ENCODE measurements at regions of chr15 and their contacts with region 1.

Region 1: DNA sequence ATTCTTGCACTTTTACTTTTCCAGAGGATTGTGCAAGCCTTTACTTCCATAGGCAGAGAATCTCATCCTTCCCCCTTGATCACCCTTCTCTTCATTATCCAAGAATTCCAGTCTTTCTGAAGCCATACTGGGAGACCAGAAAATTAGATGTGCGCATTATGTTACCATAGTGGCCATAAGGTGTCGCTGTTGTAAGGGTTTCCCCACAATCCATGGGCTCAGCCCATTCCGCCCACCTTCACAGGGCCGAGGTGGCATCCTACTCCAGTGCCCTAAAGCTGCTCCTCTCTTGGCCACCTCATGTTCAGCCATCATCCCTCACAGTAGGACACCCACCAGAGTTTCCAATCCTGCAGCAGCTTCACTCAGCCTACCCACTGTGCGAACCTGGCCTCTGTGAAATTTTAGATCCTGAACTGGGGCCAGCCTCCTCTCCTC is 35.0 kb downstream of the CTSH start:
- DNase-seq: peak in 1 of 2 donors; percentile 38
- ATAC-seq: peak in 6 of 8 donors; percentile 13 to 72 (median 46)
- H3K4me3 ChIP-seq: no peak overlapping the region
- H3K27ac ChIP-seq: no peak overlapping the region
- H3K4me1 ChIP-seq: peaks cover 10 to 76% (median 40%) of the 10 kb centered on the region in 9 donors
- H3K27me3 ChIP-seq: no peaks in the 10 kb centered on the region
- CTCF ChIP-seq: peak; percentile 49 to 75 (median 69)

Region 2: DNA sequence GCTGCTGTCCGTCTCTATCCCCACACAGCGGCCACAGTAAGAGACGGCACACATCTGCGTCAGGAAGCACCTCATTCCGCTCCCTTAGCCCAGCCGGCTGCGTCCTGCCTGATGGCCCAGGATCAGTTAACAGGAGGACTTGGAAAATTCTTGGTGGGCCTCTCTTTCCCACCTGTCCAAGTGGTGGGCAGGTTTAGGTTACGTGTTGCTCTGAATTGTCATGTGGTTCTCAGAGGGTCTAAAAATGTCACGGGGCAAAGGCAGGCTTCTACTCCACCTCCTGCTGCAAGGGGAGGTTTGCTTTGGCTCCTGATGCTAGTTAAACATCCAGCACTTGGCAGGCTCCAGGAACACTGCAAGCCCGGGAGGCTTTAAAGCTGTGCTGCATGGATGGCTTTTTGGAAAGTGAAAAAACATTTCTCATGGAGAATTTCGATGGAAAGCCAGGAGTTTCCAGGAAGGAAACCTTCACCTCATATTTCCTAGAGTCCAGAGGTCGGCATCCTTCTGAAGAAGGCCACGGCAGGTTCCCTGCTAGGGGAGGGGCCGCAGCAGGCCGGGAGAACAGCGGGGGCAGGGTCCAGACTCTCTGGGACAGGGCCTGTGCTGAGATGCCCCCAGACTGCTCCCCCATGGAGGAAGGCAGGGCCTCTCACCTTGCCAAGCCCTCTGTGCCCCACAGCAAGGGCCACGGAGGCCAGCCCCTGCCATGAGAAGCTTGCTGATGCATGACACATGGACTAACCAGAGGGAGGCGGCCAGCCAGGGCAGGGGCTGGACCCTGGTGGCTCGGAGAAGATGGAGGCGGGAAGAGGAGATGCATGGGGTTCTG is 24.2 kb after region 1 on chr15:
- intact Hi-C with region 1: loop called in 1 of 10 experiments (anchors 2 kb)
- DNase-seq: peak in 1 of 2 donors; percentile 52
- ATAC-seq: peak; percentile 4 to 62 (median 50)
- H3K4me3 ChIP-seq: no peak overlapping the region
- H3K27ac ChIP-seq: peak overlapping the region; percentile 3 to 86 (median 64)
- H3K4me1 ChIP-seq: peaks cover 3 to 83% (median 61%) of the 10 kb centered on the region in 9 donors
- H3K27me3 ChIP-seq: no peaks in the 10 kb centered on the region
- CTCF ChIP-seq: peak in 2 of 9 donors; percentile 5 to 21

Region 3: GRCh38 chr15:78979456-78980320 is 69.9 kb after region 1 on chr15:
- intact Hi-C with region 1: loop called in 9 of 10 experiments (anchors 1 to 10 kb)
- DNase-seq: peak in 1 of 2 donors; percentile 71
- ATAC-seq: peak; percentile 56 to 75 (median 68)
- H3K4me3 ChIP-seq: no peak overlapping the region
- H3K27ac ChIP-seq: peak overlapping the region in 2 of 10 donors; percentile 2 to 5
- H3K4me1 ChIP-seq: peaks cover 0 to 43% (median 8%) of the 10 kb centered on the region in 9 donors
- H3K27me3 ChIP-seq: no peaks in the 10 kb centered on the region
- CTCF ChIP-seq: peak; percentile 63 to 79 (median 70)

Region 4: GRCh38 chr15:79051029-79051428 is 141.2 kb after region 1 on chr15:
- intact Hi-C with region 1: no loop called
- DNase-seq: no peak
- ATAC-seq: no peak
- H3K4me3 ChIP-seq: no peak overlapping the region
- H3K27ac ChIP-seq: no peak overlapping the region
- H3K4me1 ChIP-seq: no peaks in the 10 kb centered on the region
- H3K27me3 ChIP-seq: peaks cover 0 to 5% (median 0%) of the 10 kb centered on the region in 7 donors
- CTCF ChIP-seq: no peak

Region 5: DNA sequence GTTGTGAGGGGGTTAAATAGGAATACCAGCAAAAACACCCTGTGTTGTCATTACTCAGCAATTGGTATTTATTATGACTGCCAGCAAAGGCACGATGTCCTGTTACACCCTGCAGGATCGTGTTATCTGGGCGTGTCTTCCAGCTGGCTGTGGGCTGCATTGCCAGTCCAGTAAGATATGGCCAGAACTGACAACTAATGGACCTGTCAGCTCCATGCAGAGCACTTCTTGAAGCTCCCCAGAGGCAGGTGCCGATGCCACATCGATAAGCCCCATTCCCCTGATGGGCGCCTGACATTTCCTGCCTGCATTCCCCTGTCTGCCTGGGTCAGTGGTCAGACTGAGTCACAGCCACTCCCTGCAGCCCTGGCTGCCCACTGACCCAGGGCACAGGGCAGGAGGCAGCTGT is 260.4 kb after region 1 on chr15:
- intact Hi-C with region 1: loop called in 1 of 10 experiments (anchors 10 kb)
- DNase-seq: peak; percentile 21 to 35
- ATAC-seq: peak in 7 of 8 donors; percentile 69 to 87 (median 82)
- H3K4me3 ChIP-seq: no peak overlapping the region
- H3K27ac ChIP-seq: peak overlapping the region in 6 of 10 donors; percentile 17 to 57 (median 45)
- H3K4me1 ChIP-seq: peaks cover 4 to 34% (median 23%) of the 10 kb centered on the region in 9 donors
- H3K27me3 ChIP-seq: peaks cover 0 to 26% (median 0%) of the 10 kb centered on the region in 7 donors
- CTCF ChIP-seq: no peak

Region 6: DNA sequence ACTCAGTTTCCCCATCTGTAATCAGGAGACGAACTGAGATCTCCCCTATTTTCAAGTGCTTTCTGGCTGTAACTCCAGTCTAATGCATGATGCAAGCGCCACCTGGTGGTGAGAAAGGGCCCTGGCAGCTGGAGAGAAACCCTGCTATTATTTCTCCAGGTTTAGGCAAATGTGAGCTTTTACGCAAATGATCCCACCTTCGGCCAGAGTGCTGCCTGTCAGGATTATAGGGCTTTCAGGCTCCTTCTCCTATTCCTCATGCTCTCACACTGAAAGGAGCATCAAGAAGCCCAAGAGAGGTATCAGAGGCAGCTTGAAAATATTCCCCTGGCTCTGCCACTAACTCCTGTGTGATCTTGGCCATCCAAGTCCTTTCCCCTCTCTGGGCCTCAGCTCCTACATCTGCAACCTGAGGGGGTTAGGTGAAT is 274.7 kb after region 1 on chr15:
- intact Hi-C with region 1: loop called in 7 of 10 experiments (anchors 1 to 10 kb)
- DNase-seq: peak; percentile 67 to 75
- ATAC-seq: peak in 3 of 8 donors; percentile 38 to 82 (median 55)
- H3K4me3 ChIP-seq: no peak overlapping the region
- H3K27ac ChIP-seq: no peak overlapping the region
- H3K4me1 ChIP-seq: no peaks in the 10 kb centered on the region
- H3K27me3 ChIP-seq: peaks cover 0 to 20% (median 0%) of the 10 kb centered on the region in 7 donors
- CTCF ChIP-seq: peak; percentile 89 to 99 (median 97)

Measured in heart right ventricle (tissue), 16 donors.